ENCODE measurements at regions of chr20 and their contacts with region 1.

Region 1: DNA sequence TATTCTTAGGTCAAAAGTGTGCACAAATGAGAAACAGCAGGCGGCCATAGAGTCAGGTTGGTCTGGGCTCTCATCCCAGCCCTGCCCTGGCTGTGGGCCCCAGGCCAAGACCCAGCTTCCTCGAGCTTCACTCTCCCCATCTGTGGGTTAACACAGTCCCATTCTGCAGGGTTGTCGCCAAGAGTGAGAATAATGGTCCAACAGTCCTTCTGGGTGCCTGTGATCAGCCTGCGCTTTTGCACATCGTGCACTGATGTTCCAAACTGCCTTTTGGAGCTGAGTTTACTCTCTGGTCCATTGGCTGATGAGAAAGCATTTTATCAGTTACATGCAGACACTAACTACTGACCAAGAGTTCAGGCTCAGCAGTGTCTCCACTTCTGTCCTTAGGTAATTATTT is 82.6 kb downstream of the INSM1 start:
- DNase-seq: no peak
- ATAC-seq: no peak

Region 2: DNA sequence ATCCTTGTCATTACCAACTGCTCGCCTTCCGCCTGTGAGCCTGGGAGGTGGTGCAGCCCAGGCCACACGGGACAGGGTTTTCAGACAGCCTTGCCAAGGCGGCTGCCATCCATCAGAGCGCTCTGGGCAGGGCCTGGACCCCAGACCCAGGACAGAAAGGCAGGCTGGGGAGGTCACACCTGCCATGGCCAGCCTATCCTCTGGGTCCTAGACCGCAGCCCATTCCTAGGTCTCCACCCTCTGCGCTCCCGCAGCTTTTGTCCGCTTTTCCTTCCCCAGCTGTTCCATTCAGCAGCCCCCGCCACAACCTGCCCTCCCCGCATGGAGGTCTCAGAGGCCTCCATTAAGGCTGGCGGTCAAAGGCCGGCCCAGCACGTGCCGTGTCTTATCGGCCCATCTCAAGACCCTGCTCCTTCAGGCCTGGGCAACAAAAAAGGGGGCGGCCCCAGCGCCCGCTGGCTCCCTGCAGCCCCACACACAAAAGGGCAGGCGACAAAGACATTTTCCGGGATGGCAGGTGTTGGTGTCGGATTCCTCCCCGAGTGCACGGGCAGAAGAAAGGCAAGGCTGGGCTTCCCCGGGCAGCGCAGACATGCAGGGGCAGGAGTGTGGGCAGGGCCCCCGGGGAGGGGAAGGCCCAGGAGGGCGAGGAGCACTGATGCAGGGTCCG is 54.4 kb before region 1 on chr20:
- intact Hi-C with region 1: loop called (anchors 1 kb)
- DNase-seq: no peak
- ATAC-seq: no peak